A549 (cell line): ENCODE measurements at regions of chr19 and their contacts with region 1.

Region 1: DNA sequence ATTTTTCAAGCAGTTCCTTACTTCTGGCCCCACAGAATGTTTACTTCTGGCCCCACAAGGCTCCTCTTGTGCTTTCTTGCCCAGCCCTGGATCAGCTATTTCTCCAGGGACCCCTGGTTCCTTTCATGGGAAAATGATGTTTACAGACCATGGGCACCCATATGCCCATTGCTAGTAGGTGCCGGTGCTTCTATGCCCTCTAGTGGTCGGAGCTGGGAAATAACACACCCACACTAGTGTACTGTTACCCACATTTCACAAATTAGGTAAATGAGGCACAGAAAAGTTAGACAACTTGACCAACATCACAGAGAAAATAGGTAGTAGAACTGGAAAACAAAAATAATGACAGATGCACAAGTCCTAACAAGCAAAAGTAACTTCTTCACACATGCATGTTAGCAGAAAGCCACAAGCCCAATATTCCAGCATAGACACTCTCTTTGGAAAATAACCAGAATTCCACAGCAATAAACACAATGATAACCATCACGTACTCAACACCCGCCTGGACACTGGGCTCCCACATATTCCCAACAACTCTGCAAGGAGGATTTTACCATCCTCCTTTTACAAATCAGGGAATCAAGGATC is 1.3 kb upstream of the CEACAM6 start:
- DNase-seq: peak; percentile 47 to 69
- ATAC-seq: peak; percentile 61 to 91; a peak in 5 of 6 replicates
- H3K4me3 ChIP-seq: no peak overlapping the region
- H3K27ac ChIP-seq: no peak overlapping the region
- H3K4me1 ChIP-seq: no peaks in the 10 kb centered on the region
- CTCF ChIP-seq: peak; percentile 87
- EP300 ChIP-seq: no peak
- POLR2A ChIP-seq: no peak
- RAD21 ChIP-seq: peak; percentile 45 to 66

Region 2: GRCh38 chr19:41657157-41657556 is 96.9 kb before region 1 on chr19:
- CTCF ChIA-PET with region 1: interaction called, 14 read pairs
- POLR2A ChIA-PET with region 1: no interaction called
- DNase-seq: no peak
- ATAC-seq: no peak
- H3K4me3 ChIP-seq: no peak overlapping the region
- H3K27ac ChIP-seq: no peak overlapping the region
- H3K4me1 ChIP-seq: no peaks in the 10 kb centered on the region
- CTCF ChIP-seq: no peak
- EP300 ChIP-seq: no peak
- POLR2A ChIP-seq: no peak
- RAD21 ChIP-seq: no peak

Region 3: GRCh38 chr19:41726493-41726892 is 27.5 kb before region 1 on chr19:
- CTCF ChIA-PET with region 1: interaction called, 25 read pairs
- POLR2A ChIA-PET with region 1: no interaction called
- DNase-seq: no peak
- ATAC-seq: peak in 1 of 2 experiments; percentile 43; a peak in 2 of 6 replicates
- H3K4me3 ChIP-seq: no peak overlapping the region
- H3K27ac ChIP-seq: no peak overlapping the region
- H3K4me1 ChIP-seq: no peaks in the 10 kb centered on the region
- CTCF ChIP-seq: no peak
- EP300 ChIP-seq: no peak
- POLR2A ChIP-seq: no peak
- RAD21 ChIP-seq: no peak

Region 4: DNA sequence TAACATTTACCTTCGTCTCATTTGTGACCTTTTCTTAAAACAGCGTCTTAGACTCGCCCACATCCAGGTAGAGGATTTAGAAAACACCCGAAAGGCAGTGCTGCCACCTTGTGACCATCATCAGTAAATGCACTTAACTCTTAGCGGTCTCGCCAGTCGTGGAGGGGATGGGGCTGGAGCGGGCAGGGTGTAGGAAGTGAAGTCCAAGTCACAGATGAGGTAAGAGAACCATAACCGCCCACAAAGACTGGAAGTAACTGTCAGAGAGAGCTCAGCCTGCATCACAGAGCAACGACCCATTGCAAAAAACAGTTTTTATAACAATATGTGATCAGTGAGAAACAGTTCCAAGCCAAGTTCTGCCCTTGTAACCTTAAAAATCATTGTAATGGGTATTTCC is 31.6 kb after region 1 on chr19:
- CTCF ChIA-PET with region 1: interaction called, 474 read pairs
- POLR2A ChIA-PET with region 1: no interaction called
- DNase-seq: peak; percentile 93 to 99
- ATAC-seq: peak; percentile 74 to 92
- H3K4me3 ChIP-seq: no peak overlapping the region
- H3K27ac ChIP-seq: no peak overlapping the region
- H3K4me1 ChIP-seq: peaks cover 5% of the 10 kb centered on the region; the same call in 1 of the 3 replicates
- CTCF ChIP-seq: peak; percentile 99
- EP300 ChIP-seq: no peak
- POLR2A ChIP-seq: no peak
- RAD21 ChIP-seq: peak; percentile 80 to 88

Region 5: DNA sequence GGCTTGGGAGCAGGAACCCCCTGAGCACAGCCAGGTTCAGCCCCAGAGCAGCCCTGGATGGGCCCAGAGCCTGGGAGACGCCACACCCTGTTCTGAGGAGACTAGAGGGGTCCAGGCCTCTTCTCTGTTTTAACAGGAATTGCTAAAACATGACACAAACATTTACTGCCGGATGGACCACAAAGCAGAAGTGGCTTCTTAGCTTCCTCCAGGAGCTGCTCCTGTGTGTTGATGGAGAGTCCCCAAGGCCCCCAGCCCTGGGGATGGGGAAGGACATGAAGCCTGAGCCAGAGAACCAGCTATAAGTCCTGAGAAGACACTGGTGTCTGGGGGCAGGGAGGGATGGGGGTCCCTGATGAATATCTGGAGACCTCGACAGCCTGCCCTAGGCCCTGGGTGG is 57.0 kb after region 1 on chr19:
- CTCF ChIA-PET with region 1: interaction called, 111 read pairs
- POLR2A ChIA-PET with region 1: no interaction called
- DNase-seq: no peak
- ATAC-seq: no peak
- H3K4me3 ChIP-seq: no peak overlapping the region
- H3K27ac ChIP-seq: no peak overlapping the region
- H3K4me1 ChIP-seq: no peaks in the 10 kb centered on the region
- CTCF ChIP-seq: no peak
- EP300 ChIP-seq: no peak
- POLR2A ChIP-seq: no peak
- RAD21 ChIP-seq: no peak

Region 6: GRCh38 chr19:41853344-41854167 is 99.5 kb after region 1 on chr19:
- CTCF ChIA-PET with region 1: interaction called, 10 read pairs
- POLR2A ChIA-PET with region 1: no interaction called
- DNase-seq: no peak
- ATAC-seq: no peak; a peak in 1 of 6 replicates
- H3K4me3 ChIP-seq: no peak overlapping the region
- H3K27ac ChIP-seq: no peak overlapping the region
- H3K4me1 ChIP-seq: no peaks in the 10 kb centered on the region
- CTCF ChIP-seq: no peak
- EP300 ChIP-seq: no peak
- POLR2A ChIP-seq: no peak
- RAD21 ChIP-seq: no peak

Region 7: DNA sequence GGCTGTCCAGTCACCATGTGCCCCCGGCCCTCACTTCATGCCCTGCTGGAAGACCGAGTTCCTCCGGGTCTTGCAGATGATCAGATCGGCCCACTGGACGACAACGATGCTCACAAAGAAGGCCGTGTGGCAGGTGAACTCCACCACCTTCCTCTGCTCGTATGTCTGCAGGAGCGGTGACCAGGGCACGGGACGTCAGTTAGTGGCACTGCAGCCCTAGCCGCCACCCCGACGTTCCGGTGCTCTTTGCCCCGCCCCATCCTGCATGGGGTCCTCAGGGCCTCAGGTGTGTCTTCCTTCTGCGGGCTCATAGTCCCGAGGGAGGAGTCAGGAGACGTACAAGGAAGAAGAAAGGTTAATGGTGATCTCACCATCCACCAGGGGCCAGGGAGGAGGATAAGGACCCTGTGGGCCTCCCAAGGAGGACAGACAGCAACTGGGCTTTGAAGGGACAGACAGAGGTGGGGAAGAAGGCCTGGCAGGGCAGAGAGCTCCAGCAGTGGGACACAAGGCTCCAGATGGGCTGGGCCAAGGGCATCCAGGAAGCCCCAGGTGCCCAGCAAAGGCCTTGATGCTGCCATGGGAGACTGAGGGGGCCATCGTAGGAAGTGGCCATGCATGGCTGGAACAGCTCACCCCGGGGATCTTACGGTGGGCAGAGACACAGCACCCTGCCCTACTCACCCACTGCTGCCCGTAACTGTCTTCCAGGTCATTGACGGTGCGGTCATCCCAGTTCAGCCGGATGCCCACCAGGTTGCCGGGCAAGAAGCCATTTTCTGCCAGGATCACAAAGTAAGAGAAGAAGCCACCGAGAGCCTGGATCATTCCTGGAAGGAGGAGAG is 214.9 kb after region 1 on chr19:
- CTCF ChIA-PET with region 1: no interaction called
- POLR2A ChIA-PET with region 1: no interaction called
- DNase-seq: no peak
- ATAC-seq: 0 out of 6 replicates have a peak, but pooled peaks of 1 of the 2 experiments have one; percentile 3
- H3K4me3 ChIP-seq: no peak overlapping the region
- H3K27ac ChIP-seq: no peak overlapping the region
- H3K4me1 ChIP-seq: no peaks in the 10 kb centered on the region
- CTCF ChIP-seq: no peak
- EP300 ChIP-seq: no peak
- POLR2A ChIP-seq: no peak
- RAD21 ChIP-seq: no peak